ENCODE measurements at regions of chr7 and their contacts with region 1.

Region 1: GRCh38 chr7:136845899-136846465 is 22.5 kb upstream of the CHRM2 start:
- DNase-seq: no peak
- ATAC-seq: no peak
- H3K4me3 ChIP-seq: no peak overlapping the region
- H3K27ac ChIP-seq: no peak overlapping the region
- H3K4me1 ChIP-seq: no peaks in the 10 kb centered on the region
- H3K27me3 ChIP-seq: no peaks in the 10 kb centered on the region
- CTCF ChIP-seq: no peak

Region 2: DNA sequence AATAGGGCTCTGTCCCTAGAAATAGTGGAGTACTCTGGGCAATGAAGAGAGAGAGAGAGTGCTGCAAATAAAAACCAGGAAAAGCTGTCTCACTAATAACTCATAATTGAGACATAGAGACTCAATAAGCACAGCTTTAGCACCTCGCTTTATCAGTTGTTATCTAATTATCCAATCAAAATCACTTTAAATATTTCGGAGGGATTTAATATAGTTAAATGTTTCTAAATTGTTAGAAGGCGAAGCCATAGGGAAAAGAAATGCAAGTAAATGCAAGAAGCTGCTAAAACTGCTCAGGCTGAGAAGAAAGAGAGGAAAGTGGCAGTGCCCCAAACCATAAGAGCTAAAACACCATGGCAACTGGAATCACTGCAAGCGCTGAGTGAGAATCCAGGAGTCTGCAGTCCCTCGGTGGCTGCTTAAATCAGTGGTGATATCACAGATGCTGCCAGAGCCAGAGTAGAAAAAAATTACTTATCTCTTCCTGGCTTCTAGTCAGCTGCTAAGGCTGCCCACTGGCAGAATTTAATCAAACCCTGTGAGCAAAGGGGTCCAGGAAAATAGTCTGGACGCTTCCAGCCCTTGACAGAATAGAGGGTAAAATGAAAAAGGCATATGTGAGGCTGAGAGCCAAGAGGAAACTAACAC is 127.9 kb before region 1 on chr7:
- CTCF ChIA-PET with region 1: no interaction called
- POLR2A ChIA-PET with region 1: no interaction called
- in situ Hi-C with region 1: no loop called
- intact Hi-C with region 1: no loop called
- DNase-seq: no peak
- ATAC-seq: no peak
- H3K4me3 ChIP-seq: no peak overlapping the region
- H3K27ac ChIP-seq: no peak overlapping the region
- H3K4me1 ChIP-seq: no peaks in the 10 kb centered on the region
- H3K27me3 ChIP-seq: no peaks in the 10 kb centered on the region
- CTCF ChIP-seq: no peak

Region 3: DNA sequence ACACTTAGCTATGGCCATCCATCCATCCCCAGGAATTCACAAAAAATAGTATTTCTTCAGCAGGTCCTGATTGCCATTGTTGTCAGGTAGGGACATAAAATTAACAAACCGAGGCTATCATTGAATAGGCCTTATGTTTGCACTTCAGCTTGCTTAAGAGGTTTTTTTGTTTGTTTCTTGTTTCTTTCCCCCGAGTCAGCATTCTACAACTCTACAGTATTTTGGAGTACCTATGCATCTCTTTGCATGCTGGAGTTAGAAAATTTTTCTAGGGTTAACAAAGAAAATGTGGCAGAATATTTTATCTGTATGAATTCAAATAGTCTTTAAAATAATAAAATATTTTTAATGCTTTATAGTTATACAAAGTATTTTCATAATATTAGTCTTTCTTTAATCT is 48.8 kb after region 1 on chr7:
- CTCF ChIA-PET with region 1: no interaction called
- POLR2A ChIA-PET with region 1: no interaction called
- in situ Hi-C with region 1: no loop called
- intact Hi-C with region 1: loop called (anchors 5 kb)
- DNase-seq: no peak
- ATAC-seq: no peak
- H3K4me3 ChIP-seq: no peak overlapping the region
- H3K27ac ChIP-seq: no peak overlapping the region
- H3K4me1 ChIP-seq: no peaks in the 10 kb centered on the region
- H3K27me3 ChIP-seq: no peaks in the 10 kb centered on the region
- CTCF ChIP-seq: no peak

Region 4: DNA sequence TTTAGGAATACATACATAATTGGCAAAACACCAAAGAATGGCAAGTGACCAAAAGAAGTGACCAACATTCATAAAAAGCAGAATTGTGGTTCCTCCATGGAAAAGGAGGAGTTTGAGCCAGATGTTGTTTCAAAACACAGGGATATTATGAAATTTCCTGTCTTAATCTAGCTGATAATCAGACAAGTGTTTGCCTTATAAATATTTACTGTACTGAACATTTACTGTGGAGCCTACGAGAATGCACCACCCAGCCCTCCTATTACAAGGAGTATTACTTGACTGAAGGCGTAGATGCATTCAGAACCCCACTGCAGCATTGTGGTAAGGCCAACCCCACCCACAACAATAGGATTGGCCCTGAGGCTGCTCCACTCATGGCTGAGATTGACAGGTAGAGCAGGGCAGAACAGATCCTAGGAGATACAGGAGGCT is 1349.2 kb after region 1 on chr7:
- CTCF ChIA-PET with region 1: no interaction called
- POLR2A ChIA-PET with region 1: no interaction called
- in situ Hi-C with region 1: no loop called
- intact Hi-C with region 1: no loop called
- DNase-seq: no peak
- ATAC-seq: no peak
- H3K4me3 ChIP-seq: no peak overlapping the region
- H3K27ac ChIP-seq: no peak overlapping the region
- H3K4me1 ChIP-seq: no peaks in the 10 kb centered on the region
- H3K27me3 ChIP-seq: no peaks in the 10 kb centered on the region
- CTCF ChIP-seq: no peak

Measured in Panc1 (cell line).